ENCODE measurements at regions of chr2 and their contacts with region 1.

Region 1: GRCh38 chr2:142989273-142990204 is 112.1 kb downstream of the KYNU start:
- DNase-seq: no peak
- H3K4me3 ChIP-seq: no peak overlapping the region
- H3K4me3 Mint-ChIP-seq: no peak overlapping the region
- H3K27ac Mint-ChIP-seq: no peak overlapping the region
- H3K4me1 ChIP-seq: no peaks in the 10 kb centered on the region; the same call in 1 of the 2 replicates
- H3K4me1 Mint-ChIP-seq: no peaks in the 10 kb centered on the region
- H3K27me3 ChIP-seq: no peaks in the 10 kb centered on the region
- H3K27me3 Mint-ChIP-seq: no peaks in the 10 kb centered on the region
- CTCF ChIP-seq: peak; percentile 27 to 41

Region 2: GRCh38 chr2:142165790-142166189 is 823.7 kb before region 1 on chr2:
- CTCF ChIA-PET with region 1: no interaction called
- POLR2A ChIA-PET with region 1: no interaction called
- intact Hi-C with region 1: loop called (anchors 5 kb)
- DNase-seq: peak in 1 of 2 experiments; percentile 17
- H3K4me3 ChIP-seq: no peak overlapping the region
- H3K4me3 Mint-ChIP-seq: no peak overlapping the region
- H3K27ac Mint-ChIP-seq: no peak overlapping the region
- H3K4me1 ChIP-seq: no peaks in the 10 kb centered on the region
- H3K4me1 Mint-ChIP-seq: no peaks in the 10 kb centered on the region
- H3K27me3 ChIP-seq: no peaks in the 10 kb centered on the region
- H3K27me3 Mint-ChIP-seq: no peaks in the 10 kb centered on the region
- CTCF ChIP-seq: peak in 1 of 2 experiments; percentile 34

Region 3: DNA sequence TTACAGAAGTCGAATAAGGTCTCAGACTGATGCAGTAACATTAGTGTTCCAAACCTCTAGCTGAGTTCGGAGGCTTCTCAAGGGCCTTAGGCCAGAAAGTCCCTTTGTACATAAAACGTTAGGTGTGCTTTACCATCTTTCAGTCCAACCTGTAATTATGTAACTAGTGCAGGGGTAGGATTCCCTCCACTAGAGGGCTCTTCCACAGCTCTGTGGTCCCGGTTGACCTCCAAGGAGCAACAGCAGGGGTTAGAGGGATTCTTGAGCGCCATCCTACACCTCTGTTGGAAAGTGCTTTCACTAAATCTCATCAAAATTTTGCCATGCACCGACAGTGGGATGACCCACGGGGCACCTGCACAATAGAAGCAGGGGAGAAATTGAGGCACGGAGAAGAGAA is 702.9 kb before region 1 on chr2:
- CTCF ChIA-PET with region 1: no interaction called
- POLR2A ChIA-PET with region 1: no interaction called
- intact Hi-C with region 1: loop called (anchors 10 kb)
- DNase-seq: peak; percentile 42 to 50
- H3K4me3 ChIP-seq: no peak overlapping the region
- H3K4me3 Mint-ChIP-seq: no peak overlapping the region
- H3K27ac Mint-ChIP-seq: no peak overlapping the region
- H3K4me1 ChIP-seq: no peaks in the 10 kb centered on the region
- H3K4me1 Mint-ChIP-seq: peaks cover 7% of the 10 kb centered on the region
- H3K27me3 ChIP-seq: no peaks in the 10 kb centered on the region
- H3K27me3 Mint-ChIP-seq: no peaks in the 10 kb centered on the region
- CTCF ChIP-seq: peak; percentile 70 to 77

Region 4: DNA sequence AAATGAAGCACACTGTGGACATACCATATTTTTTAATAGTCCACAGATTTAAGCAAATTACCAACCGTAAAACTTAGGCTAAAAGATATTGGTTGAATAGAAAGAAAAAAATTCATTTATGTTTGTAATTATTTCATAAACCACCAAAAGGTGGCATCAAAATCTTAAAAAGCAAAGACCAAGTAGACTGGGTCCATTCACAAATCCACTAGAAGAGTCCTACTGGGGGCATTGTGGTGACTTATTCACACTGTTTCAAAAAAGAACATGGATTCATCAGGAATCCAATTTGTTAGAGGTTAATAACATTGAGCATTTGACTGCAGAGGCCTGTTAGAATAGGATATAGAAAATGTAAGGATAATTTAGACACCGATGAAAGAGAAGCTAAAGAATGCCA is 307.0 kb before region 1 on chr2:
- CTCF ChIA-PET with region 1: no interaction called
- POLR2A ChIA-PET with region 1: no interaction called
- intact Hi-C with region 1: loop called (anchors 1 kb)
- DNase-seq: peak in 1 of 2 experiments; percentile 5
- H3K4me3 ChIP-seq: no peak overlapping the region
- H3K4me3 Mint-ChIP-seq: no peak overlapping the region
- H3K27ac Mint-ChIP-seq: no peak overlapping the region
- H3K4me1 ChIP-seq: no peaks in the 10 kb centered on the region
- H3K4me1 Mint-ChIP-seq: no peaks in the 10 kb centered on the region
- H3K27me3 ChIP-seq: no peaks in the 10 kb centered on the region
- H3K27me3 Mint-ChIP-seq: no peaks in the 10 kb centered on the region
- CTCF ChIP-seq: no peak

Region 5: GRCh38 chr2:142796161-142796560 is 193.4 kb before region 1 on chr2:
- CTCF ChIA-PET with region 1: no interaction called
- POLR2A ChIA-PET with region 1: no interaction called
- intact Hi-C with region 1: loop called (anchors 1 kb)
- DNase-seq: peak in 1 of 2 experiments; percentile 6
- H3K4me3 ChIP-seq: no peak overlapping the region
- H3K4me3 Mint-ChIP-seq: no peak overlapping the region
- H3K27ac Mint-ChIP-seq: no peak overlapping the region
- H3K4me1 ChIP-seq: no peaks in the 10 kb centered on the region
- H3K4me1 Mint-ChIP-seq: no peaks in the 10 kb centered on the region
- H3K27me3 ChIP-seq: no peaks in the 10 kb centered on the region
- H3K27me3 Mint-ChIP-seq: no peaks in the 10 kb centered on the region
- CTCF ChIP-seq: peak in 1 of 2 experiments; percentile 19

Region 6: GRCh38 chr2:142974288-142975024 is 15.1 kb before region 1 on chr2:
- CTCF ChIA-PET with region 1: no interaction called
- POLR2A ChIA-PET with region 1: no interaction called
- intact Hi-C with region 1: no loop called
- DNase-seq: peak in 1 of 2 experiments; percentile 42
- H3K4me3 ChIP-seq: no peak overlapping the region
- H3K4me3 Mint-ChIP-seq: peak overlapping the region; percentile 18
- H3K27ac Mint-ChIP-seq: peak overlapping the region; percentile 77
- H3K4me1 ChIP-seq: peaks cover 38% of the 10 kb centered on the region
- H3K4me1 Mint-ChIP-seq: peaks cover 13% of the 10 kb centered on the region
- H3K27me3 ChIP-seq: no peaks in the 10 kb centered on the region
- H3K27me3 Mint-ChIP-seq: no peaks in the 10 kb centered on the region
- CTCF ChIP-seq: no peak